ENCODE measurements at regions of chr15 and their contacts with region 1.

Region 1: GRCh38 chr15:74781431-74782258 is at the start of gene CSK:
- DNase-seq: peak; percentile 83 to 92 (median 86)
- ATAC-seq: peak in 3 of 4 donors; percentile 58 to 65 (median 59)
- H3K4me3 ChIP-seq: peak within 1 kb of the TSS; percentile 70 to 98 (median 82)
- H3K27ac ChIP-seq: peak within 1 kb of the TSS; percentile 82 to 98 (median 91)
- H3K4me1 ChIP-seq: peaks cover 34 to 90% (median 63%) of the 10 kb centered on the region in 12 donors
- H3K27me3 ChIP-seq: no peaks in the 10 kb centered on the region
- CTCF ChIP-seq: peak; percentile 40 to 69 (median 60)
- POLR2A ChIP-seq: no peak
- total RNA-seq, gene CSK: 19.1 to 66.7 (median 28.4) TPM

Region 2: DNA sequence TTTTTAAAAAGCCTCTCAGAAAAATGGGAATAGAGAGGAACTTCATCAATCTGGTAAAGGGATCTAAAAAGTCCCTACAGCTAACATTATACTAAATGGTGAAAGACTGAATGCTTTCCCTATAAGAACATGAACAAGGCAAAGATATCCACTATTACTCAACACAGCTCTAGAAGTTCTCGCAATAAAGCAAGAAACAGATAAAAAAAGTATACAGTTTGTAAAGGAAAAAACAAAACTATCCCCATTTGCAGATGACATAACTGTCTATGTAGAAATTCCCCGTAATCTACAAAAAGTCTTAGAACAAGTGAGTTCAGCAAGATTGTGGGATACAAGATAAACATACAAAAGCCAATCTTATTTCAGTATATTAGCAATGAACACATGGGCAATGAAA is 101.2 kb before region 1 on chr15:
- intact Hi-C with region 1: no loop called
- DNase-seq: no peak
- ATAC-seq: no peak
- H3K4me3 ChIP-seq: no peak overlapping the region
- H3K27ac ChIP-seq: no peak overlapping the region
- H3K4me1 ChIP-seq: no peaks in the 10 kb centered on the region
- H3K27me3 ChIP-seq: no peaks in the 10 kb centered on the region
- CTCF ChIP-seq: no peak
- POLR2A ChIP-seq: no peak

Region 3: DNA sequence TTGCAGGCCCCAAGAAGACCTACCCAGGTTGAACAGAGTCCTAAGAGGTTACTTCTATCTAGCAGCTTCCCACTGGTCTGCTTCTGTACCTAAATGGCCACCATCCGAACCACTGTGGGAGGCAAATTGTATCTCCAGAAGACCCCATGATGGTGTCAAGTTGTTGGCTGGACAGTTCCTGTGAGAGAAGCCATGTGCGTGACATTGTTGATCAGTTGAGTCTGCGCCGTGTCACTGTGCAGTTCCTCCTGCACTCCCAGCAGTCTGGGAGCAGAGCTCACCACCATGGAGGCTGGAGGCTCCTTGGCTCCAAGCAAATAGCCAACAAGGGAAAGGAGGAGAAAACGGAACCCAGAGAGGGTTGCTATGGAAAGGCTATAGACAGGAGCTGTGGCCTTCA is 48.8 kb before region 1 on chr15:
- intact Hi-C with region 1: no loop called
- DNase-seq: no peak
- ATAC-seq: no peak
- H3K4me3 ChIP-seq: no peak overlapping the region
- H3K27ac ChIP-seq: no peak overlapping the region
- H3K4me1 ChIP-seq: peaks cover 0 to 3% (median 0%) of the 10 kb centered on the region in 12 donors
- H3K27me3 ChIP-seq: peaks cover 0 to 36% (median 0%) of the 10 kb centered on the region in 9 donors
- CTCF ChIP-seq: no peak
- POLR2A ChIP-seq: no peak

Region 4: GRCh38 chr15:74799856-74800547 is 18.4 kb after region 1 on chr15:
- intact Hi-C with region 1: loop called in 2 of 10 experiments (anchors 1 kb)
- DNase-seq: peak; percentile 73 to 90 (median 79)
- ATAC-seq: peak; percentile 79 to 91 (median 85)
- H3K4me3 ChIP-seq: peak overlapping the region in 1 of 12 donors; percentile 2
- H3K27ac ChIP-seq: peak overlapping the region in 5 of 12 donors; percentile 35 to 71 (median 60)
- H3K4me1 ChIP-seq: peaks cover 0 to 50% (median 19%) of the 10 kb centered on the region in 12 donors
- H3K27me3 ChIP-seq: no peaks in the 10 kb centered on the region
- CTCF ChIP-seq: peak; percentile 94 to 98 (median 97)
- POLR2A ChIP-seq: no peak

Region 5: DNA sequence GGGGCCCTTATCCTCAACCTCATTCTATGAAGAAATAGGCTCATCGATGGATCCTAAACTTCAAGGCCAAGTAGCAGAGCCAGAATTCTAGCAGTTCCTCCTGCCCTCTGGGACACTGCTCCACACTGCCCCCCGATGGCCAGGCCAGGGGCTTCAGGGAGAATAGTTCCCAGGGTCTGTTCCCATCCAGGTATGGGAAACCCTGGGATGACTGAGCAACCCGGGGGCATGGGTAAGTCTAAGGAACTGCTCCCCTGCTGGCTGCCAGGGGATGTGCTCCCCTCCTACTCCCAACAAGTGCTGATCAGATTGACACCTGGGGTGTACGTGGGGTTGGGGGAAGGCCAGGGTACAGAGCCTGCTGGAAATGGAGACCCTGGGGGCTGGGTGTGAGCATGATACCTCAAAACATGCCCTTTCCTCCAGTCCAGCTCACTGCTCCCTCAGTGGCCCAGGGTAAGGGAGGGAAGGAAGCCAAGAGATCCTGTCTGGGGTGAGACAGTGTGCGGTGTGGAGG is 53.7 kb after region 1 on chr15:
- intact Hi-C with region 1: loop called in 2 of 10 experiments (anchors 5 kb)
- DNase-seq: peak in 4 of 5 donors; percentile 44 to 83 (median 64)
- ATAC-seq: peak; percentile 17 to 55 (median 34)
- H3K4me3 ChIP-seq: no peak overlapping the region
- H3K27ac ChIP-seq: no peak overlapping the region
- H3K4me1 ChIP-seq: peaks cover 0 to 14% (median 6%) of the 10 kb centered on the region in 12 donors
- H3K27me3 ChIP-seq: no peaks in the 10 kb centered on the region
- CTCF ChIP-seq: peak; percentile 64 to 89 (median 72)
- POLR2A ChIP-seq: no peak

Region 6: DNA sequence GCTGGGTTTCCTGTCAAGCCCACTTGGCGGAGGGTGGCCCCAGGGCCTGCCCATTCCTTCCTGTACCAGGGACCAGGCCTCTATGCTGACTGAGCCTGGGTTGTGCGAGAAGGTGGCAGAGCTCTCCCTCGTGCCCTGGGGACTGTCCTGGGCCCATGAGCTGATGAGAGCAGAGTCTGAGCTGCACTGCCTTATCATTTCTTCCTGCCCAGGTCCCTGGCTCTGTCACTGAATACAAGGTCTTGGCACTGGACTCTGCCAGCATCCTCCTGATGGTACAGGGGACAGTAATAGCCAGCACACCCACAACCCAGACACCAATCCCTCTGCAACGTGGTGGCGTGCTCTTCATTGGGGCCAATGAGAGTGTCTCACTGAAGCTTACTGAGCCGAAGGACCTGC is 115.7 kb after region 1 on chr15:
- intact Hi-C with region 1: loop called in 1 of 10 experiments (anchors 5 kb)
- DNase-seq: peak in 3 of 5 donors; percentile 23 to 59 (median 27)
- ATAC-seq: peak; percentile 57 to 74 (median 63)
- H3K4me3 ChIP-seq: no peak overlapping the region
- H3K27ac ChIP-seq: peak overlapping the region in 6 of 12 donors; percentile 13 to 54 (median 30)
- H3K4me1 ChIP-seq: peaks cover 0 to 44% (median 15%) of the 10 kb centered on the region in 12 donors
- H3K27me3 ChIP-seq: no peaks in the 10 kb centered on the region
- CTCF ChIP-seq: no peak
- POLR2A ChIP-seq: no peak

Region 7: GRCh38 chr15:74937596-74938296 is 156.1 kb after region 1 on chr15 and contains the start of gene COX5A:
- intact Hi-C with region 1: loop called in 1 of 10 experiments (anchors 5 kb)
- DNase-seq: peak; percentile 95 to 97 (median 96)
- ATAC-seq: peak; percentile 92 to 99 (median 96)
- H3K4me3 ChIP-seq: peak within 1 kb of the TSS; percentile 67 to 100 (median 96)
- H3K27ac ChIP-seq: peak within 1 kb of the TSS; percentile 93 to 99 (median 99)
- H3K4me1 ChIP-seq: peaks cover 0 to 45% (median 34%) of the 10 kb centered on the region in 12 donors
- H3K27me3 ChIP-seq: no peaks in the 10 kb centered on the region
- CTCF ChIP-seq: peak in 1 of 12 donors; percentile 5
- POLR2A ChIP-seq: peak in 1 of 2 donors; percentile 92
- total RNA-seq, gene COX5A: 754 to 1,537 (median 1,120) TPM

Measured in heart left ventricle (tissue), 16 donors.